ENCODE measurements at regions of chr16 and their contacts with region 1.

Region 1: GRCh38 chr16:16042076-16042475 is 92.7 kb downstream of the ABCC1 start:
- DNase-seq: peak in 1 of 2 experiments; percentile 27
- H3K4me3 ChIP-seq: no peak overlapping the region
- H3K27ac ChIP-seq: no peak overlapping the region
- H3K4me1 ChIP-seq: peaks cover 28% of the 10 kb centered on the region
- H3K27me3 ChIP-seq: no peaks in the 10 kb centered on the region
- CTCF ChIP-seq: no peak

Region 2: DNA sequence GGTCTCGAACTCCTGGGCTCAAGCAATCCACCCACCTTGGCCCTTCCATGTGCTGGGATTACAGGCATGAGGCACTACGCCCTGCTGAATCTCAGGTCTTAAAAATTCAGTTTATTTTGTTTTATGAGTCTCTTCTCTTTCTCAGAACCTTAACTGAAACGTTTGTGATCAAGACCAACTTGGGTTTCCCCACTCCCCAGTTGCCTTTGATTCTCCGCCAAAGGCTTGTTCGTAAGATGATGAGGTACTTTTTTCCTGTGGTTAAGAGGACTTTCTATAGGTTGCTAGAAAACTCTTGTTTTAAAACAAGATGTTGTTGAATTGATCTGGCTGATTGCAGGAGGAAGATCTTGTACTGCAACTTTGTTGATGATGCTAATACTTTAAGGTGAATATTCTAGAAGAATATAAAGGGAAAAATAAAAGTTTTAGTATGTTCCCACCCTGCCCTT is 81.0 kb before region 1 on chr16:
- CTCF ChIA-PET with region 1: no interaction called
- POLR2A ChIA-PET with region 1: interaction called, 11 read pairs
- intact Hi-C with region 1: no loop called
- DNase-seq: no peak
- H3K4me3 ChIP-seq: no peak overlapping the region
- H3K27ac ChIP-seq: no peak overlapping the region
- H3K4me1 ChIP-seq: peaks cover 32% of the 10 kb centered on the region
- H3K27me3 ChIP-seq: no peaks in the 10 kb centered on the region
- CTCF ChIP-seq: no peak

Region 3: GRCh38 chr16:15966420-15967222 is 75.5 kb before region 1 on chr16:
- CTCF ChIA-PET with region 1: interaction called, 3 read pairs
- POLR2A ChIA-PET with region 1: interaction called, 54 read pairs
- intact Hi-C with region 1: no loop called
- DNase-seq: peak; percentile 83 to 88
- H3K4me3 ChIP-seq: no peak overlapping the region; the same call in 1 of the 2 replicates
- H3K27ac ChIP-seq: peak overlapping the region; percentile 73
- H3K4me1 ChIP-seq: peaks cover 57% of the 10 kb centered on the region
- H3K27me3 ChIP-seq: no peaks in the 10 kb centered on the region
- CTCF ChIP-seq: no peak

Region 4: DNA sequence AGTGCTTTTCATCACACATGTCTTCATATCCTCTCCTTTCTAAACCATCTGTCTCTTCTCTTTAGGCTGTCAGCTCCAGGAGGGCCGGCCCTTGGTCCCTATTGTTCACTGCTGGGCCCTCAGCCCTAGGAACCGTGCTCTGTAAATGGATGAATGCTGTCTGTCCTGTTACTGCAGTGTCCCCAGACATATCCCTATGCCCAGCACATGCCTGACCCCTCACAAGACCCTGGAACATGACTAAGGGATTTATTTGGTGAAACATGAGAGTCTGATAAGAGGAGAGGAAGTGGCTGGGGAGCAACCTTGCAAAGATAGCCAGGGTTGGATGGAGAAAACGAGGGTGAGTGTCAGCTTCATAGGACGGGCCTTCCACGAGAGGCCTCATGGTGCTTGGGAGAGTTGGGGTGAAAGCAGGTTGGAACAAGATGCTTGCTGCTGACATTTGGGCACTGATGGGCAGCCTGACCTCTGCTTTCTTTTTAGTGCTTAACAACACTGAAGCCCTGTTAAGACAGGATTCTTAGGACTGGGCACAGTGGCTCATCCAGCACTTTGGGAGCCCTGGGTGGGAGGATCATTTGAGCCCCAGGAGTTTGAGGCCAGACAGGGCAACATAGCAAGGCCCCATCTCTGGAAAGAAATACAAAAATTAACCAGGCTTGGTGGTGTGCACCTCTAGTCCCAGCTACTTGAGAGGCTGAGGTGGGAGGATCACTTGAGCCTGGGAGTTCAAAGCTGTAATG is 53.6 kb before region 1 on chr16:
- CTCF ChIA-PET with region 1: interaction called, 14 read pairs
- POLR2A ChIA-PET with region 1: no interaction called
- intact Hi-C with region 1: no loop called
- DNase-seq: peak in 1 of 2 experiments; percentile 24
- H3K4me3 ChIP-seq: no peak overlapping the region
- H3K27ac ChIP-seq: peak overlapping the region; percentile 43
- H3K4me1 ChIP-seq: peaks cover 13% of the 10 kb centered on the region; the same call in 1 of the 2 replicates
- H3K27me3 ChIP-seq: no peaks in the 10 kb centered on the region
- CTCF ChIP-seq: no peak

Region 5: GRCh38 chr16:16021988-16022682 is 19.9 kb before region 1 on chr16:
- CTCF ChIA-PET with region 1: no interaction called
- POLR2A ChIA-PET with region 1: interaction called, 16 read pairs
- intact Hi-C with region 1: loop called (anchors 1 kb)
- DNase-seq: peak; percentile 96 to 99
- H3K4me3 ChIP-seq: peak overlapping the region; percentile 37; the same call in 1 of the 2 replicates
- H3K27ac ChIP-seq: peak overlapping the region; percentile 73
- H3K4me1 ChIP-seq: peaks cover 94% of the 10 kb centered on the region
- H3K27me3 ChIP-seq: no peaks in the 10 kb centered on the region
- CTCF ChIP-seq: no peak

Region 6: DNA sequence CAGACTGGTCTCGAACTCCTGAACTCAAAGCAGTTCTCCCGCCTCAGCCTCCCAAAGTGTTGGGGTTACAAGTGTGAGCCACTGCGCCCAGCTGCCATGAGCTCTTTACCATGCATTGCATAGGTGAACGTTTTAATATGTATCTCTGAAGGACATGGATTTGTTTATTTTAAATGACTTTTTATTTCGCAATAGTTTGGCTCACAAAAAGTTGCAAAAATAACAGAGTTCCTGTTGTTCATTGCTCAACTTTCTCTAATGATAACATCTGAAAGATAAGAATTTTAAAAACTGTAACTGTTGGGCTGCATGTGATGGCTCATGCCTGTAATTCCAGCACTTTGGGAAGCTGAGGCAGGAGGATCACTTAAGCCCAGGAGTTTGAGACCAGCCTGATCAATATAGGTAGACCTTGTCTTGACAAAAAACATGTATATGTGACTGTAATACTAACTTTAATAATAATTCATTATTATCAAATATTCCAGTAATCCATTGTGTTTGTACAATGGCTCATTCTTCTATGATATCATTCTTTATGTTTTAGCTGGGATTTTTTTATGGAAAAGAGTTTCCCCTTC is 12.6 kb before region 1 on chr16:
- CTCF ChIA-PET with region 1: no interaction called
- POLR2A ChIA-PET with region 1: interaction called, 3 read pairs
- intact Hi-C with region 1: loop called (anchors 1 kb)
- DNase-seq: peak in 1 of 2 experiments; percentile 90
- H3K4me3 ChIP-seq: no peak overlapping the region
- H3K27ac ChIP-seq: peak overlapping the region; percentile 90
- H3K4me1 ChIP-seq: peaks cover 61% of the 10 kb centered on the region
- H3K27me3 ChIP-seq: no peaks in the 10 kb centered on the region
- CTCF ChIP-seq: no peak

Region 7: DNA sequence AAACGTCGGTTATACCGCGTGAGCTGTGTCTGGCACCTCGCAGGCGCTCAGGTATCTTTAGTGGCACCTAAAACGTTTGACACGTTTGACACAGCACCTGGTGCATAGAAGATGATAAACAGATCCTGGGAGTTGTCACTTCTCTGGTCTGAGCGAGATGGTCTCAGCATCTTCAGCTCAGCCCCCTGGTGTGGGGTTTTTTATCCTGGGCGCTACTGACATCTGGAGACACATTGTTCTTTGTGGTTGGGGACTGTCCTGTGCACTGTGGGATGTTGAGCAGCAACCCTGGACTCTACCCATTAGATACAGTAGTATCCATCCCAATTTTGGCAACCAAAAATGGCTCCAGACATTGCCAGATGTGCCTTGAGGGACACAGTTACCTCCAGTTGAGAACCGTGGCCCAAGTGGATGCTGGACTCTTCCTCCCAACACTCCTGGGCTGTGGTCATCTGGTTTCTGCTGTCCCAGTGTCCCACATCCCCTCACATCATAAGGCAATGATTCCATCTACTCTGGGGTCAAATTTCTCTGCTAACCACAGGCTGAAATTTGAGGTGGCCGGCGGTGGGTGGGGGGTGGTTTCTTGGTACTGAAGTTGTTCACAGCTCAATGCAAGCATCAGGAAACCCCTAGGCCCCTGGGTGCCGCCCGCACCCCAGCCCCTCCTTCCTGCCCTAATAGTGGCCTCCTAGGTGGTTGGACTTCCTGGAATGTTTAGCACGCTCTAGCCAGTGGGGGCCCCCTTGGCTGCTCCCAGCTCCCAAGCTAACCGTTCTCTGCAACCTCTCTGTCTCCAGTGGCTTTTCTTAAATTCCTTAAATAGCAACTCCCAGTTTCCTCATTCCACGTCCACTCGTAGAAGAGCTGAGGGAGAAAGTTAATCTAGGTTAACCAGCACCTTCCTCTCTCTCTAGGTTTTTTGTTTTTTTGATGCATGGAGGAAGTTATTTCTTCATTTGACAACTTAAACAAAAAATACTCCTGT is 32.1 kb after region 1 on chr16:
- CTCF ChIA-PET with region 1: interaction called, 3 read pairs
- POLR2A ChIA-PET with region 1: interaction called, 9 read pairs
- intact Hi-C with region 1: loop called (anchors 1 kb)
- DNase-seq: peak; percentile 98 to 99
- H3K4me3 ChIP-seq: no peak overlapping the region; the same call in 1 of the 2 replicates
- H3K27ac ChIP-seq: peak overlapping the region; percentile 85
- H3K4me1 ChIP-seq: peaks cover 27% of the 10 kb centered on the region
- H3K27me3 ChIP-seq: no peaks in the 10 kb centered on the region
- CTCF ChIP-seq: no peak

Region 8: DNA sequence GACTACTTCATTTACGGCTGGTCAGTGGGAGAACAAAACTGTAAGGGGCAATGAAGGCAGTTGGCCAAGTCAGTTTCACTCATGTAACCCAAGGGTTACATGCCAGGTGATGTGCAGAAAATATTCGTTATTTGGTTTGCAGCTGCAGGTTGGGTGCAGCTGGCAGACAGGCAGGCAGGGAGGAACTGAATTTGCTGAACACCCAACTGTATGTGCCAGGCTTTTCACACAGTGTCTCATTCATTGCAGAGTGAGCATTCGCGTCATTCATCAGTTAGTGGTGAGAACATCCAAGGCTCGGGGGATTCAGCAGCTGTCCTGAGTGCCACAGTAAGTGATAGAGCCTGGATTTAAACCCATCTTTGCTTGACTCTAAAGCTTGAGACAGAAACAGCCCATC is 121.5 kb after region 1 on chr16:
- CTCF ChIA-PET with region 1: no interaction called
- POLR2A ChIA-PET with region 1: no interaction called
- intact Hi-C with region 1: no loop called
- DNase-seq: no peak
- H3K4me3 ChIP-seq: no peak overlapping the region
- H3K27ac ChIP-seq: no peak overlapping the region
- H3K4me1 ChIP-seq: no peaks in the 10 kb centered on the region
- H3K27me3 ChIP-seq: no peaks in the 10 kb centered on the region
- CTCF ChIP-seq: no peak

Measured in PC-9 (cell line).